IMR-90 (cell line): ENCODE measurements at regions of chr3 and their contacts with region 1.

Region 1: GRCh38 chr3:123415453-123415775 is 33.5 kb downstream of the ADCY5 start:
- DNase-seq: no peak
- ATAC-seq: no peak
- H3K4me3 ChIP-seq: no peak overlapping the region
- H3K27ac ChIP-seq: no peak overlapping the region
- H3K4me1 ChIP-seq: no peaks in the 10 kb centered on the region
- H3K27me3 ChIP-seq: peaks cover 76% of the 10 kb centered on the region
- CTCF ChIP-seq: no peak
- POLR2A ChIP-seq: no peak
- RAD21 ChIP-seq: no peak

Region 2: DNA sequence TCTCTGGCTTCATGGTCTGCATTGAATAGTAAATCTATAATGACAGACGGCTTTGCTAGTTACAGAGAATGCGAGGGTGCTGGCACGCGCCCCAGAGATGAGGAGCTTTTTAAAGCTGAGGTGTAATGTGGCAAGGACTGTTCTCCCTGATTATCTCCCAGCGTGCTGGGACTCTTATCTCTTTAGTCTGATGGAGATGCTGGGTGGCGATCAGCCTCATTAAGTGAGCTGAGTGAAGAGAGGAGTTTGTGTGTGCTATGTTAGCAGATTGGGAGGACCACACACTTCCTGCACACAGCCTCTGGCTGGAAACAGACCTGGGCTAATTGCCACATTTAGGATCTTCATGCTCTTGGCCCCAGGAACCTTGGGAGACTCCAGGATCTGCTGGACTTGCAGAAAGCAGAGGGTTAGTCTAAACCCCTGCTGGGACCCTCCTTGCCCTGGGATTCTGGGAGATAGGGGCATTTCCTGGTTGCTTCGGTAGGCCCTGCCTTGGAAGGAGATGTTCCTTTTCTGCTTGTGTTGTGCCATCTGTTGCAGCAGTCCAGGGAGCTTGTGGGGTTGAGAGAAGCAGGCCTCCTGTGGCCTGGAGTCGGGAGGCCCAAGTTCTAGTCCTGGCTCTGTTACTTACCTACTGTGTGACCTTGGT is 333.6 kb before region 1 on chr3:
- CTCF ChIA-PET with region 1: interaction called, 15 read pairs
- POLR2A ChIA-PET with region 1: no interaction called
- dilution Hi-C with region 1: no loop called
- in situ Hi-C with region 1: no loop called
- intact Hi-C with region 1: no loop called
- DNase-seq: no peak
- ATAC-seq: no peak
- H3K4me3 ChIP-seq: no peak overlapping the region
- H3K27ac ChIP-seq: no peak overlapping the region
- H3K4me1 ChIP-seq: peaks cover 37% of the 10 kb centered on the region
- H3K27me3 ChIP-seq: peaks cover 5% of the 10 kb centered on the region
- CTCF ChIP-seq: no peak
- POLR2A ChIP-seq: no peak
- RAD21 ChIP-seq: no peak

Region 3: GRCh38 chr3:123980539-123980938 is 565.1 kb after region 1 on chr3:
- CTCF ChIA-PET with region 1: no interaction called
- POLR2A ChIA-PET with region 1: no interaction called
- dilution Hi-C with region 1: no loop called
- in situ Hi-C with region 1: no loop called
- intact Hi-C with region 1: no loop called
- DNase-seq: no peak
- ATAC-seq: no peak
- H3K4me3 ChIP-seq: no peak overlapping the region
- H3K27ac ChIP-seq: no peak overlapping the region
- H3K4me1 ChIP-seq: peaks cover 6% of the 10 kb centered on the region
- H3K27me3 ChIP-seq: peaks cover 20% of the 10 kb centered on the region
- CTCF ChIP-seq: no peak
- POLR2A ChIP-seq: no peak
- RAD21 ChIP-seq: no peak